Psoas muscle (tissue), 8 donors: ENCODE measurements at regions of chr1 and their contacts with region 1.

Region 1: DNA sequence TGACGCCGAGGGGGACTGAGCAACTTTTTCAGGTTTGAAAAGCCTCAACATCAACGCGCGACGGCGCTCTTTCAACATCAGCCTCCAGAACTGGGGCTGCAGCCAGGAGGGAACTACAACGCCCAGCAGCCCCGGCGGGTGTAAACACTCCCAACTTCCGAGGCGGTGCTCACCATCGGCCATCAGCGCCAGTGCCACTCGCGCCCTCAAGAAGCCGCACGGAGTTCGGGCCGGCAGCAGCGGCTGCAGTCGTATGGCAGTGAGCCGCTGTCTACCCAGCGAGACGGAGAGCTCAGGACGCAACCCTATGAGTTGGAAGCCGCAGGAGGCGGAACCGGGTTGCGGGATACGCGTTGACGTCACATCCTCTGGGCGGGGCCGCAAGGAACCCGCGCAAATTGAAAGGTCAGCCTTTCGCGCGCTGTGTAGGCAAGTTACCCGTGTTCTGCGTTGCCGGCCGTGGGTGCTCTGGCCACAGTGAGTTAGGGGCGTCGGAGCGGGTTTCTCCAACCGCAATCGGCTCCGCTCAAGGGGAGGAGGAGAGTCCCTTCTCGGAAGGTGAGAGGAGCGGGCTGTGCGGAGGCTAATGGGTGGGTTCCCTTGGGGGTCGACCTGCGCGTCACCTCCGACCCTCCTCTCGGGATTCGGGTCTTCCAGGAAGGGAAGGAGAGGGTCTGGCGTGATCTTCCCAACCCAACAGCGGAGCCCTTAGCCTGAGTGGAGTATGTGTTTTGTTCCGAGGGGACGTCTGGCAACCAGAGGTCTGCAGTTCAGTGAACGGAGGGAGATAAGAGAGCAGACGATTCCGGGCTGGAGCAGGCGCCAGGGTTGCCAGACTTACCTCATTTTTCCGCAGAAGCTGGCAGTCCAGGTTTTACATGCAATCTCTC is at the start of gene EXO1:
- DNase-seq: peak; percentile 87 to 93
- ATAC-seq: peak; percentile 95 to 99 (median 98)
- H3K4me3 ChIP-seq: peak within 1 kb of the TSS; percentile 75
- H3K27ac ChIP-seq: peak within 1 kb of the TSS; percentile 91
- H3K4me1 ChIP-seq: no peaks in the 10 kb centered on the region
- H3K27me3 ChIP-seq: no peaks in the 10 kb centered on the region
- CTCF ChIP-seq: peak; percentile 6
- total RNA-seq, gene EXO1: 0.32 TPM in 1 of 4 donors, not detected in the others

Region 2: GRCh38 chr1:241519308-241520079 is 328.5 kb before region 1 on chr1 and contains the start of gene FH:
- intact Hi-C with region 1: loop called in 1 of 2 experiments (anchors 10 kb)
- DNase-seq: peak; percentile 95 to 96
- ATAC-seq: peak; percentile 99
- H3K4me3 ChIP-seq: peak within 1 kb of the TSS; percentile 92
- H3K27ac ChIP-seq: peak within 1 kb of the TSS; percentile 87
- H3K4me1 ChIP-seq: peaks cover 23% of the 10 kb centered on the region
- H3K27me3 ChIP-seq: peaks cover 0 to 3% (median 0%) of the 10 kb centered on the region in 3 donors
- CTCF ChIP-seq: no peak
- total RNA-seq, gene FH: 111 to 164 (median 140) TPM

Region 3: DNA sequence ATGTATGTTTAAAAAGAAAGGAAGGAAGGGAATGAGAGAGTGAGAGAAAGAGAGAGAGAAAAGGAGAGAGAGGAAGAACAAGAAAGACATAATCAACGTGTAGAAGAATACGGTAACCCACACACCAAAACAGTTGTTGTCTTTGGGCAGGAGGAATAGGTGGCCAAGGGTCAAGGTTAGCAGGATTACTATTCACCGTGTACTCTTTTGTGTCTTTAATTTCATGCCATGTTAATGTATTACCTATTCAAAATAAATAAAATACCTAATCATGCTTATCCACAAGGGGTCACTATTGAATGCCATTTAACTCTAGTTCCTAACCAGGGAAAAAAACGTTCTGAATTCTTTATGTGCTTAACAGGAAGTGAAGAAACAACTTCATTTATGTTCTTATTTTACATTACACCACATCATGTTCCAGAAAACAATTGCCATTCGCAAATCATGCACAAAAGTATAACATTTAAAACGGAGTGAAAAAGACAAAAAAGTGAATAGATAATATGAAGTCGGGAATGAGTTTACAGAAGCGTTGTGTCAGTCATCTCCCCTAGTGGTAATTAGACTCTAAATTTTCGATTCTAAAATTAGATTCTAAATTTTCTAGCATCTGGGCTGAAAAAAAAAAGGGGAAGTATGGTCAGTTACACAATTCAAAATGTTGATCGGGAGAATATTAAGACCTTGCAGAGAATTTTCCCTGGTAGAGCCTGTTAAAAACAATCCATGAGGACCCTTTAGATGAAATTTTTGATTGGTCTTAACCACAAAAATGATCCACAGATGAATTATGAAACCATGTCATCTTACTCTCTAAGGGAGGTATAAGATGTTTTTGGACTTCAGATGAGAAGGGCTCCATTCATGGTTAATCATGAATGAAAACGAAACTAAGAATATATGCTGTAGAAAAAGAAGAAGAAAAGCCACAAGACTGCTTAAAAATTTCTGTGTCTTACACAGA is 316.6 kb before region 1 on chr1:
- intact Hi-C with region 1: loop called in 1 of 2 experiments (anchors 10 kb)
- DNase-seq: no peak
- ATAC-seq: peak; percentile 56 to 86 (median 62)
- H3K4me3 ChIP-seq: peak overlapping the region; percentile 73
- H3K27ac ChIP-seq: peak overlapping the region; percentile 38
- H3K4me1 ChIP-seq: no peaks in the 10 kb centered on the region
- H3K27me3 ChIP-seq: peaks cover 0 to 4% (median 3%) of the 10 kb centered on the region in 3 donors
- CTCF ChIP-seq: peak; percentile 58

Region 4: GRCh38 chr1:241640029-241640818 is 207.8 kb before region 1 on chr1 and contains the starts of genes CHML and OPN3:
- intact Hi-C with region 1: loop called (anchors 5 to 10 kb)
- DNase-seq: peak; percentile 95 to 96
- ATAC-seq: peak; percentile 99 to 100 (median 99)
- H3K4me3 ChIP-seq: peak within 1 kb of the TSS; percentile 85
- H3K27ac ChIP-seq: peak within 1 kb of the TSS; percentile 77
- H3K4me1 ChIP-seq: peaks cover 8% of the 10 kb centered on the region
- H3K27me3 ChIP-seq: no peaks in the 10 kb centered on the region
- CTCF ChIP-seq: no peak
- total RNA-seq, gene CHML: 3.5 to 10.7 (median 5.4) TPM
- total RNA-seq, gene OPN3: 1.7 to 4.7 (median 3.8) TPM

Region 5: GRCh38 chr1:241888232-241888631 is 40.2 kb after region 1 on chr1:
- intact Hi-C with region 1: no loop called
- DNase-seq: no peak
- ATAC-seq: no peak
- H3K4me3 ChIP-seq: no peak overlapping the region
- H3K27ac ChIP-seq: no peak overlapping the region
- H3K4me1 ChIP-seq: no peaks in the 10 kb centered on the region
- H3K27me3 ChIP-seq: no peaks in the 10 kb centered on the region
- CTCF ChIP-seq: no peak